Activated CD4-positive, alpha-beta T cell treated with anti-CD3 and anti-CD28 coated beads, Interleukin-2, amount 10 ng/mL, durations not matched to agents 24 days and 14 days (primary cell): ENCODE measurements at regions of chr6 and their contacts with region 1.

Region 1: GRCh38 chr6:78824045-78824444 is 43.3 kb upstream of the IRAK1BP1 start:
- DNase-seq: no peak
- H3K4me3 Mint-ChIP-seq: no peak overlapping the region
- H3K27ac Mint-ChIP-seq: no peak overlapping the region
- H3K4me1 Mint-ChIP-seq: no peaks in the 10 kb centered on the region
- H3K27me3 Mint-ChIP-seq: no peaks in the 10 kb centered on the region

Region 2: GRCh38 chr6:78810698-78811097 is 13.3 kb before region 1 on chr6:
- intact Hi-C with region 1: loop called (anchors 1 kb)
- DNase-seq: no peak
- H3K4me3 Mint-ChIP-seq: no peak overlapping the region
- H3K27ac Mint-ChIP-seq: no peak overlapping the region
- H3K4me1 Mint-ChIP-seq: no peaks in the 10 kb centered on the region
- H3K27me3 Mint-ChIP-seq: no peaks in the 10 kb centered on the region

Region 3: GRCh38 chr6:79070206-79070825 is 246.3 kb after region 1 on chr6:
- intact Hi-C with region 1: no loop called
- DNase-seq: no peak
- H3K4me3 Mint-ChIP-seq: no peak overlapping the region
- H3K27ac Mint-ChIP-seq: no peak overlapping the region
- H3K4me1 Mint-ChIP-seq: peaks cover 34% of the 10 kb centered on the region
- H3K27me3 Mint-ChIP-seq: no peaks in the 10 kb centered on the region